OCI-LY7 (cell line): ENCODE measurements at regions of chr1 and their contacts with region 1.

Region 1: DNA sequence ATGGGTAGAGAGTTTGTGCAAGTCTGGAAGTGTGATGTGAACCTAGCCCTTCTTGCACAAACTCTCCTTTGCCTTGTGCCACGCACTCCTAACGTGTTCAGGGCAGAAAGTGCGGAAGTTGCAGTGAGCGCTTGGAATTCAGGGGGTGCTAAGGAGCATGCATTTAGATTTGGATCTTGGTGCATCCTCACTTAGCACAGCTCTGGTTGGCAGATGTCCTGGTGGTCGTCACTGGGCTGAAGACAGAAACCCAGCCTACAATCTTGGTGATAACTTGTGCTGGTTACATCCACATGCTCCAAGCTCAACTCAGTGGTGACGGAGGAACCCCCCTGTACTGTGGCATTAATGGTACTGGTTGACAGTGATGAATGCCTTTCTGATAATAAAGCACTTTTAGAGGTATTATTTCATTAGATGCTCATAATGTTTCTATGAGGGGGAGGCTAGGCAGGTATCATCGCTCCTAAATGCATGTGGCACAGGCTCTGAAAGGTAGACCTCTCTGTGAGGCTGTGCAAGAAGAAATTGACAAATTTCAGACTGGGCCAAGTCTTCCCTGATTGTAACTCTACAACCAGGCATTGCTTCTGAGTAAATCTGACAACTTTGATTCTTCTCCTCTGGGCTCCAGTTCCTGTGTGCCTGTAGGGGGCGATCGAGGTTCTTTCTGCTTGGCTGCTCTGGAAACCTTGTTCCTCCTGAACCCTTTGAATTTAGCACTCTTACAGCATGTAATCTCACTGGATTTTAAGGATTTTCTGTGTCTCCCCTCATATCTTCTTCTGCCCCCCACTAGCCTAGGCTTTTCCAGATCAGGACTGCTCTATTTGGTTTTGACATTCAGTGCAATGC is 40.6 kb downstream of the MAPKAPK2 start:
- DNase-seq: peak; percentile 68
- H3K4me3 ChIP-seq: no peak overlapping the region
- H3K27ac ChIP-seq: no peak overlapping the region
- H3K4me1 ChIP-seq: peaks cover 13% of the 10 kb centered on the region
- CTCF ChIP-seq: peak; percentile 84

Region 2: DNA sequence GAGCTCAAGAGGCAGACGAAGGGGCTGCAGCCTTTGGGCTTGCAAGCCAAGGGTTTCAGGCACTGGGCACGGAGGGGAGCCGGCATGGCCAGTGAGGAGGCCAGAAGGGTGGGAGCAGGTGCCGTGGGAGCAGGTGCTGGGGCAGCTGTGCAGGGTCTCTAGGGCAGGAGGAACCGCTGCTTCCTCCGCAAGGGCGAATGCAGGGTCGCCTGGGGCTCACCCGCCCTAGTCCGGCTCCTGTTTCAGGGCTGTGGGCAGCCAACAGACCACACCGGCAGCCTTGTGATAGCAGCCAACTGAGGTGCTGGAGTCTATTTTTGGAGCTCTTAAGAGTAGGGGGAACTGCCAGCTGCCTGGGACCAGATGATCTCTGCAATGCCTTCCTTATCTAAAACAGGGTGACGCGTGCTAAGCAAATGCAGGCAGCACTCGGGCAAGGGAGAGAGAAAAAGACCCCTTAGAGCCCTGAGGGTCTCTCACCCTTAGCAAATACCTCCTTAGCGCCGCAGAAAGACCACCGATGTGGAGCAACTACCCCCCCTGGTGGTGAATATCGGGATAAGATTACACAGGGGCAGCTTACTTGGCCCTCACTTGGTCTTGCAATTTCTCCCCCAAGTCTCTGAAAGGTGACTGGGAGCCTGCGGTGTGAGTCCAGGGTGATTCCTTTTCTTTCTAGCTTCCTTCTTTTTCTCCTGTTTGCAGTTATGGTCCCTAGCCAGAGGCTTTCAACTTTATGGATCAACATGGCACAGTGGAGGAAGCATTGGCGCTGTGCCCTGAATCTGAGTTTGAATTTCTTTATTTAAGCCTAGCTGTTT is 61.3 kb before region 1 on chr1:
- CTCF ChIA-PET with region 1: no interaction called
- POLR2A ChIA-PET with region 1: no interaction called
- intact Hi-C with region 1: loop called (anchors 2 kb)
- DNase-seq: peak; percentile 81
- H3K4me3 ChIP-seq: no peak overlapping the region
- H3K27ac ChIP-seq: no peak overlapping the region
- H3K4me1 ChIP-seq: peaks cover 18% of the 10 kb centered on the region
- CTCF ChIP-seq: peak; percentile 92

Region 3: GRCh38 chr1:206761159-206761768 is 35.9 kb after region 1 on chr1:
- CTCF ChIA-PET with region 1: no interaction called
- POLR2A ChIA-PET with region 1: no interaction called
- intact Hi-C with region 1: no loop called
- DNase-seq: no peak
- H3K4me3 ChIP-seq: no peak overlapping the region
- H3K27ac ChIP-seq: no peak overlapping the region
- H3K4me1 ChIP-seq: peaks cover 9% of the 10 kb centered on the region
- CTCF ChIP-seq: no peak

Region 4: GRCh38 chr1:206808615-206809014 is 83.3 kb after region 1 on chr1:
- CTCF ChIA-PET with region 1: no interaction called
- POLR2A ChIA-PET with region 1: interaction called, 5 read pairs
- intact Hi-C with region 1: loop called (anchors 1 kb)
- DNase-seq: peak; percentile 71
- H3K4me3 ChIP-seq: no peak overlapping the region
- H3K27ac ChIP-seq: no peak overlapping the region
- H3K4me1 ChIP-seq: peaks cover 1% of the 10 kb centered on the region
- CTCF ChIP-seq: peak; percentile 74

Region 5: GRCh38 chr1:206955476-206956451 is 230.4 kb after region 1 on chr1:
- CTCF ChIA-PET with region 1: no interaction called
- POLR2A ChIA-PET with region 1: no interaction called
- intact Hi-C with region 1: no loop called
- DNase-seq: no peak
- H3K4me3 ChIP-seq: no peak overlapping the region
- H3K27ac ChIP-seq: no peak overlapping the region
- H3K4me1 ChIP-seq: no peaks in the 10 kb centered on the region
- CTCF ChIP-seq: no peak

Region 6: GRCh38 chr1:207241164-207241934 is 516.0 kb after region 1 on chr1:
- CTCF ChIA-PET with region 1: no interaction called
- POLR2A ChIA-PET with region 1: no interaction called
- intact Hi-C with region 1: no loop called
- DNase-seq: no peak
- H3K4me3 ChIP-seq: no peak overlapping the region
- H3K27ac ChIP-seq: no peak overlapping the region
- H3K4me1 ChIP-seq: no peaks in the 10 kb centered on the region
- CTCF ChIP-seq: no peak